ENCODE measurements at regions of chr17 and their contacts with region 1.

Region 1: DNA sequence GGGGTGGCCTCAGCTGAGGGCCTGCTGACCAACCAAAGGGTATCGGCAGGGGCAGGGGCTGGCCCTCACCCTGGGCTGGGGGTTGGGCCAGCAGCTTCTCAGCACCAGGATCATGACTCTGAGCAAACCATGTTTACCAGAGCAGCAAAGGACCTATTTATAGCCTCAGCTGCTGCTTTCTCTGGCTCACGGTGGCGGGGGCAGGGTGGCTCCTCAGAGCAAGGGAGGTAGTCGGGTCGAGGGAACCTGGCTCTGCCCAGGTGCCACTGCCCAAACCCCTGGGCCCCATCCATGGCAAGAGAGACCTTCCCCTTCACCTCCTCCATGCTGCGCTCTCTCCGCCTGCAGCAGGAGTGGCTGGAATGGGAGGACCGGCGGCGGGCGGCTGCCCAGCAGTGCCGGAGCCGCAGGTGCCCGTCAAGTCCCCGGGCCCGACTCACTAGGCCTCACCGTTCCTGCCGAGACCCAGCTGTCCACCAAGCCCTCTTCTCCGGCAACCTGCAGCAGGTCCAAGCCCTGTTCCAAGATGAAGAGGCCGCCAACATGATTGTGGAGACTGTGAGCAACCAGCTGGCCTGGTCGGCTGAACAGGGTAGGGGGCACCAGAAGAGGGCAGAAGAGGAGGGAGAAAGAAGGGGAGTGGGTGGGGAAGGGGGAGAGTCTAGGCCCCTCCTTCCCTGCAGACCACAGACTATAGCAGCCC is at the start of gene ASB16:
- DNase-seq: no peak
- ATAC-seq: no peak
- H3K4me3 ChIP-seq: no peak within 1 kb of the TSS
- H3K27ac ChIP-seq: no peak within 1 kb of the TSS; the same call in 1 of the 2 replicates
- H3K4me1 ChIP-seq: peaks cover 0 to 13% of the 10 kb centered on the region in 2 experiments; a peak in 2 of 4 replicates
- H3K27me3 ChIP-seq: no peaks in the 10 kb centered on the region
- CTCF ChIP-seq: no peak
- POLR2A ChIP-seq: no peak
- RAD21 ChIP-seq: no peak
- total RNA-seq, gene ASB16: 0.37 TPM

Region 2: DNA sequence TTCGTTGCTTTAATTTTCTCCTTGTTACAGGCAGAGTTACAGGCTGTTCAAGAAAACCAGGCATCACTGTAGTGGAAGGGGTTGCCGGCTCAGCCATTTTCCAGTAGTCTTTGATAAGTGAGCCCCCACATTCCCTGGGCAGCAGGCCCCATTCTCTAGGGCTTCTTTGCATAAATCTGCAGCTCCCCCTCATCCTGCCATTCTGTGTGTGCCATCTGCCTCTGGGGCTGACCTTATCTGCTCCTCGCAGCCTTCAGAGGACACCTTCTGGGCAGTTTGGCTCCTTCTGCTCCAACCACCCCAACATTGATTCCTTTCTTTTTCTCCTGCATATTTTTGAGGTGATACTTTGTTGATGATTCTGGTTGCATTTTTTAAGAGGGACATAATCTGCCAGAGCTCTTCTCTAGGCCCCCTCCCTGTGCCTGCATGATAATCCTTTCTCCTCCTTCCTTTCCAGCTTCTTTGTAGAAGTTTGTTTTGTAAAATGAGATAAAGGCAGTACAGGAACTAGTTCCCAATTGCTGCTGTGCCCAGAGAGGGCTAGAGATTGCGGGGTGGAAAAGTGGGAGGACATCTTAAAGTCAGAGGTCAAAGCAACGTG is 1128.5 kb before region 1 on chr17:
- CTCF ChIA-PET with region 1: no interaction called
- POLR2A ChIA-PET with region 1: no interaction called
- RAD21 ChIA-PET with region 1: no interaction called
- intact Hi-C with region 1: no loop called
- DNase-seq: no peak
- ATAC-seq: no peak
- H3K4me3 ChIP-seq: no peak overlapping the region
- H3K27ac ChIP-seq: no peak overlapping the region
- H3K4me1 ChIP-seq: no peaks in the 10 kb centered on the region
- H3K27me3 ChIP-seq: no peaks in the 10 kb centered on the region
- CTCF ChIP-seq: no peak
- POLR2A ChIP-seq: no peak
- RAD21 ChIP-seq: no peak

Region 3: DNA sequence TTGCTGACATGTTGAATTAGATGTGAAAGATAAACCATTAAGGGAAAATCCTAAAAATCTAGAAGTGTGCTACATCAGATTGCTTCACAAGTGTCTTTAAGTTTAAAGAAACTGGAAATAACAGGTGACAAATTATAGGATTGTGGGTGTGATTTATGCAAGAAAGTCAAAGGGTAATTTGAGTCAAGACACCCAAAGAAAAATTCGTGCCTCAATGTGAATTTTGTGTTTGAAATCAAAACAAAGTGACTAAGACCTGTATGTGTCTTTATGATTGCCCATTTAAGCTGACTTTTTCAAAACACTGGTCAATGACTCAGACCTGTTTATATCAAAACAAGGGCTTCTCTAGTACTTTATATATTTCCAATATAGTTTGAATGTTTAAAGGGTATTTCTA is 211.7 kb before region 1 on chr17:
- CTCF ChIA-PET with region 1: no interaction called
- POLR2A ChIA-PET with region 1: no interaction called
- RAD21 ChIA-PET with region 1: no interaction called
- intact Hi-C with region 1: no loop called
- DNase-seq: no peak
- ATAC-seq: no peak
- H3K4me3 ChIP-seq: no peak overlapping the region
- H3K27ac ChIP-seq: no peak overlapping the region
- H3K4me1 ChIP-seq: no peaks in the 10 kb centered on the region; a peak in 1 of 4 replicates
- H3K27me3 ChIP-seq: no peaks in the 10 kb centered on the region
- CTCF ChIP-seq: no peak
- POLR2A ChIP-seq: no peak
- RAD21 ChIP-seq: no peak

Region 4: GRCh38 chr17:44084131-44084544 is 86.5 kb before region 1 on chr17:
- CTCF ChIA-PET with region 1: interaction called, 23 read pairs
- POLR2A ChIA-PET with region 1: interaction called, 4 read pairs
- RAD21 ChIA-PET with region 1: interaction called, 9 to 11 read pairs
- intact Hi-C with region 1: loop called (anchors 1 kb)
- DNase-seq: no peak
- ATAC-seq: peak; percentile 60
- H3K4me3 ChIP-seq: no peak overlapping the region
- H3K27ac ChIP-seq: no peak overlapping the region; the same call in 1 of the 2 replicates
- H3K4me1 ChIP-seq: peaks cover 34 to 62% of the 10 kb centered on the region in 2 experiments
- H3K27me3 ChIP-seq: no peaks in the 10 kb centered on the region
- CTCF ChIP-seq: peak in 2 of 3 experiments; percentile 58 to 62; a peak in 5 of 6 replicates
- POLR2A ChIP-seq: no peak
- RAD21 ChIP-seq: peak; percentile 26

Region 5: GRCh38 chr17:44123356-44124117 is 47.1 kb before region 1 on chr17 and contains the start of gene HDAC5:
- CTCF ChIA-PET with region 1: interaction called, 12 read pairs
- POLR2A ChIA-PET with region 1: no interaction called
- RAD21 ChIA-PET with region 1: interaction called in 1 of 2 experiments, 3 read pairs
- intact Hi-C with region 1: no loop called
- DNase-seq: peak; percentile 90
- ATAC-seq: peak; percentile 94
- H3K4me3 ChIP-seq: peak within 1 kb of the TSS; percentile 65 to 85
- H3K27ac ChIP-seq: peak within 1 kb of the TSS; percentile 77
- H3K4me1 ChIP-seq: peaks cover 14 to 36% of the 10 kb centered on the region in 2 experiments
- H3K27me3 ChIP-seq: no peaks in the 10 kb centered on the region
- CTCF ChIP-seq: peak; percentile 53 to 59 (median 53); a peak in 5 of 6 replicates
- POLR2A ChIP-seq: no peak
- RAD21 ChIP-seq: peak; percentile 52
- total RNA-seq, gene HDAC5: 32.9 TPM

Region 6: DNA sequence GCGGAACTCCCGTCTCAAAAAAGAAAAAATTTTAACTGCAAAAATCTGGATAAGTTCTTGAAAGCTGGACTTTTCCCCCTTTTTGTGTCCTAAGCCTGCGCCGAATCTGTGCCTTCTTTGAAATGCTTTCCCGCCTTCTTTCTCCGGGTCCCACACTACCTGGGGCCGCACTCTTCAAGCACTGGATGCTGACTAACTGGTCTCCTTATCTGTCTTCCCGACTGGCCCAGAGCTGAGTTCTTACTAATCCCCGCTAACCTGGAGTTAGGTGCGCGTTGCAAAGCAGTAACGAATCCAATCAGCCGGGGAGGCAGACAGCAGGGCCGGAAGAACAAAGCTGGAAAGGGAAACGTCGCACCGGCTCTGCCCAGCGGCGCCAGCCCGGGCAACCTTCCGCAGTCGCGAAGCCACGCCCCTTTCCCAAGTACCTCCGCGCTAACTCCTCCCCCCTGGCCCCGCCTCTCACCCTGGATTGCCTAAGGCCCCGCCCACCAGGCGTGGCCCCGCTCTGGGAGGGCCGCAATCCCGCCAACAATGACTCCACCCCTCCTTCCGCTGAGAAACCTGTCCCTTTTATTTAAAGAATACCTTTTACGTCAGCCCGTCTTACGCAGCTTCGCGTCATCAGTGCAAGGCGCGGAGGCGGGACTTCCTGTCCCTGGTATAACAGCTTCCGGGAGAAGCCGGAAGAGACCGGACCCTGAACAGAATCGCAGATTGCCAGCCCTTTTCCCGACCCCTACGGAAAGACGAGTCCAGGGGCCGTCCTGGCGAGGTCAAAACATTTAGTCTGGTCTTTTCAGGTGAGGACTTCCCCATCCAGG is 15.9 kb after region 1 on chr17 and contains the start of gene TMUB2:
- CTCF ChIA-PET with region 1: interaction called, 12 read pairs
- POLR2A ChIA-PET with region 1: interaction called, 5 read pairs
- RAD21 ChIA-PET with region 1: interaction called in 1 of 2 experiments, 3 read pairs
- intact Hi-C with region 1: no loop called
- DNase-seq: peak; percentile 99
- ATAC-seq: peak; percentile 87
- H3K4me3 ChIP-seq: peak within 1 kb of the TSS; percentile 89 to 91
- H3K27ac ChIP-seq: peak within 1 kb of the TSS; percentile 89
- H3K4me1 ChIP-seq: peaks cover 7 to 20% of the 10 kb centered on the region in 2 experiments; a peak in 3 of 4 replicates
- H3K27me3 ChIP-seq: no peaks in the 10 kb centered on the region
- CTCF ChIP-seq: no peak
- POLR2A ChIP-seq: peak; percentile 77
- RAD21 ChIP-seq: no peak
- total RNA-seq, gene TMUB2: 25.1 TPM

Region 7: GRCh38 chr17:44689477-44690217 is 519.0 kb after region 1 on chr17 and contains the start of gene CCDC43:
- CTCF ChIA-PET with region 1: no interaction called
- POLR2A ChIA-PET with region 1: no interaction called
- RAD21 ChIA-PET with region 1: no interaction called
- intact Hi-C with region 1: no loop called
- DNase-seq: peak; percentile 90
- ATAC-seq: peak; percentile 93
- H3K4me3 ChIP-seq: peak within 1 kb of the TSS; percentile 98
- H3K27ac ChIP-seq: peak within 1 kb of the TSS; percentile 69
- H3K4me1 ChIP-seq: peaks cover 13 to 30% of the 10 kb centered on the region in 2 experiments
- H3K27me3 ChIP-seq: no peaks in the 10 kb centered on the region
- CTCF ChIP-seq: no peak
- POLR2A ChIP-seq: peak; percentile 87
- RAD21 ChIP-seq: no peak
- total RNA-seq, gene CCDC43: 33.0 TPM

Measured in HCT116 (cell line).